HEK293T (cell line): ENCODE measurements at regions of chr20 and their contacts with region 1.

Region 1: GRCh38 chr20:37178839-37179670 is at the starts of genes MROH8 and RPN2:
- DNase-seq: peak; percentile 94

Region 2: DNA sequence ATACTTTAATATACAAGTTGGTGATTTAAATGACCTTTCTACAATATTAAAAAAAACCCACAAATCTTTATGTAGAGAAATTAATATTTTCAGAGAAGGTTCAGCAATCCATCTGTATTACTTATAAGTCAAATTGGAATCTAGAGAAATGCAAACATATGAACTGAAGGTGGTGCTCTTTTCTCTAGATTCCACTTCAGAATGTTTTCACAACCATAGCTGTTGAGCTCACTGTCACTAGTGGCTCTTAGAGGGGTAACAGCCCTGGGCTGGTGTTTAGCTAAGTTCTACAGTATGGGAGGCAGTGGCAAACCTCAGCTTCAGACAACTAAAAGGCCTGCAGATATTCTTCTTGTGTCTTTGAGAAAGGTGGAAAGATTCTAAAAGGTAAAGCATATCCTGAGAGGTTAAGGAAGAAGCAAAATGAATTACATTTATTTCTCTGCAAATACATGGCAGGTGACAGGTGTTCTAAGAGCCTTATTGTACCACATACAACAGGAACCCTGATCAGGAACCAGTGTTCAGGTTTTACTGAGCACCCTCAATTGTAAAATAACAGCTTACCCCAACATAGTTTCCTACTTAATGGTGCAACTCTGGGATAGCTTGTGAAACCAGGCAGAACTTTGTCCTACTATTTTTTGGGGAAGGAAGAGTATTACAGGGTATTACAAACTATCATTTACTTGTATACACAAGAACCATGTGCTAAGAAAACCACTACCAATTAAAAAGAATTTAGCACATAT is 171.0 kb before region 1 on chr20:
- CTCF ChIA-PET with region 1: no interaction called
- POLR2A ChIA-PET with region 1: no interaction called
- DNase-seq: peak; percentile 16

Region 3: GRCh38 chr20:37095599-37096414 is 83.2 kb before region 1 on chr20 and contains the start of gene RBL1:
- CTCF ChIA-PET with region 1: interaction called, 3 read pairs
- POLR2A ChIA-PET with region 1: interaction called, 31 read pairs
- DNase-seq: peak; percentile 80

Region 4: DNA sequence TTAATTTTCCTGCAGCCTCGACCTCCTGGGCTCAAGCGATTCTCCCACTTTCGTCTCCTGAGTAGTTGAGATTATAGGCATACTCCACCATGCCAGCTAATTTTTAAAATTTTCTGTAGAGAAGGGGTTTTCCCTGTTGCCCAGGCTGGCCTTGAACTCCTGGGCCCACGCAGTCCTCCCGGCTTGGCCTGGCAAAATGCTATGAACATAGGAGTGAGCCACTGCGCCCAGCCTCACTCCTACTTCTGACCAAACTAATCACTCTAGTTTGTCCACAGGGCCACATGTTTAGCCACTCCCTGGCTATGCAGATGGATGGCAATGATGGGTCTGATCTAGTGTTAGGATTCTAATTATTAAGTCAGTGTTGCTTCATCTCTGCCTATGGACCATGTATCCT is 31.8 kb before region 1 on chr20:
- CTCF ChIA-PET with region 1: no interaction called
- POLR2A ChIA-PET with region 1: no interaction called
- DNase-seq: no peak

Region 5: GRCh38 chr20:37192137-37192854 is 13.2 kb after region 1 on chr20:
- CTCF ChIA-PET with region 1: interaction called, 8 read pairs
- POLR2A ChIA-PET with region 1: interaction called, 20 read pairs
- DNase-seq: peak; percentile 83

Region 6: DNA sequence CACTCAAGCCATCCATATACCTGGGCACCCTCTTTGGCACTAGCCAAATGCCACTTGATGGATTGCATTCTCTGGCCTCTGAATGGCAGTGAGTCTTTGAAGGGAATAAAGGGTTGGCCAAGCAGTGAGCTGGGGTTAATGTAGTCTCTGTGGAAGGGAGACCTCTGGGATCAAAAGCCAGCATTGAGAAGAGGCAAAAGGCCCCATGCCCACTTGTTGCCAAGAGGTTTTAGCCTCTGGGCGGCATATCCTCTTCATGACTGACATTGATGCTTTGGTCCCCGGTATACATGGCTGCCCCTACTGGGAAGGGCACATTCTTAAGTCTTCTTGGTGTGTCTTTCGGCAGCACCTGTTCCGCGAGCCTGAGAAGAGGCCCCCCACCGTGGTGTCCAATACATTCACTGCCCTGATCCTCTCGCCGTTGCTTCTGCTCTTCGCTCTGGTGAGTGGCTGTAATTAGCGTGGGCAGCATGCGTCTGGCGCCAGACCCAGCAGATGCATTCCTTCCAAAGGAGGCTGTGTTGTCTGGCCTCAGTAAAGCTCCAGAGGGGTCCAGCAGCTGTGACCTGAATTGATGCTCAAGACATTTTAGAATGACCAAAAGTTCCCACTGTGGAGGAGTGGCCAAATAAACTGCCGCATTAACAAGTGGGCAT is 53.0 kb after region 1 on chr20:
- CTCF ChIA-PET with region 1: no interaction called
- POLR2A ChIA-PET with region 1: no interaction called
- DNase-seq: no peak

Region 7: DNA sequence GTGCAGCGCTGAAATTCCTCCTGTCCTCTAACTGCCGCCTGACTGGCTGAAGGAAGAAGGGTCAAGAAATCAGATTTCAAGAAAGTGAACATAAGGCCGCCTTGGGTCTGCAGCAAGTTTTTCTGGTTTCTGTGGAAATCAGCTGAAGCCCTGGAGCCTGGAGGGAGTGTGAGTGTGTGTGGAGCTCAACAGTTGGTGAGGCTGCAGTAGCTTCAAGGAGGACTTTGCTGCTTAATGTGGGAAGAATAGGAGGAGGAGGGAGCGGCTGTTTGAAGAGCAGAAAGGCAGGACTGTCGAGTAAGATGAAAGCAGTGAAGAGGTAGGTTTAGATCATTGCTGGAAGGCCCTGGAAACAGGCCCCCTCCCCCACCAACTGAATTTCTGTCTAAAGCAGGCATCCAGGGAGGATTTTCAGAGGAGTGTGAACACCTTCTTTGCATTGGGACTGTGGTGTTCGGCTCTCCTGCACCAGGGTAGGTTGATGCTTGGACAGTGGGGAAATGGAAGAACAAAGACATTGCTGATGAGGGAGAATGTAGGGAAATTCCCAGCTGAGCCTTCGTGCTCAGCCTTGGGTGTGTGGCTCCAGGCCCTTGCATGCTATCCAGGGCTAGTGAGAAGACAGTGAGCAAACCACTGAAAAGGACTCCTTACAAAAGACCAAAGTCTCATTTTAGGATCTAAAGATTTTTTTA is 644.4 kb after region 1 on chr20:
- CTCF ChIA-PET with region 1: no interaction called
- POLR2A ChIA-PET with region 1: no interaction called
- DNase-seq: no peak